CD4-positive, alpha-beta memory T cell (primary cell): ENCODE measurements at regions of chr17 and their contacts with region 1.

Region 1: DNA sequence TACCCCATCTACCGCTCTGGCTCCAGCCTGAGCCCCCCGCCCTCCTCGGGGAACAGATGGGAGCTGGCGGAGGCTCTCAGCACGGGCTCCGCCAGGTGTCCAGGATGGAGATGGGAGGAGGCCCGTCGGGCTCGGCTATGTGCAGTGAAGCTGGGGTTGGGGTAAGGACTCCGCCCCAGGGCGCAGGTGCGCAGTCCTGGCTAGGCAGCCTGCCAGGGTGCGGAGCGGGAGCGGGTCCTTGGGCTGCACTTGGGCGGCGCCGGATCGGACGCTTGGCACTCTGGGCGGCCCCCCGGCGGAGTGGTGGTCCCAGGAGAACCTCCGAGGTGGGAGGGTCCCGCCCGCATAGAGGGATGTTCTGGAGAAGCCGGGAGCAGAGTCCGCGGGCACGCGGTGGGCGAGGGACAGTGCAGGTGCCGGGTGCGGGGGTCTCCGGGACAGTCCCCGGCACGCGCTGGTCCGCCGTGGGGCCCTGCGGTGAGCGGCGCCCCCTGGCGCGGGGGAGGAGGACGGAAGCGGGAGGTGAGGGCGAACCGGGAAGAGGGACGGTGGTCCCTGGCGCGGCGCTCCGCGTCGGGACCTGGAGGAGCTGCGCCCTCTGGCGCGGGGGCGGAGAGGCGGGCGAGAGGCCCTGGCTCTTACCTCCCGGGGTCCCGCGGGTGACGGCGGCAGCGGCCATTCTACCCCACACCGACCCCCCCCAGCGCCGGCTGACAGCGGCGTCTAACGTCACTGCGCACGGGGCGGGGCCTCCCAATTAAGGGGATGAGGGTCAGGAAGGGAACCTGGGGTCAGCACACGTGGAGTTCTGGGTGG is at the start of gene CAMTA2:
- DNase-seq: peak; percentile 78 to 90 (median 81)
- H3K4me3 ChIP-seq: peak within 1 kb of the TSS; percentile 74 to 95
- H3K4me3 Mint-ChIP-seq: peak within 1 kb of the TSS; percentile 92 to 95 (median 93)
- H3K27ac ChIP-seq: peak within 1 kb of the TSS; percentile 85
- H3K27ac Mint-ChIP-seq: peak within 1 kb of the TSS; percentile 94 to 98 (median 96)
- H3K4me1 ChIP-seq: peaks cover 29% of the 10 kb centered on the region
- H3K4me1 Mint-ChIP-seq: peaks cover 29 to 64% (median 37%) of the 10 kb centered on the region in 4 donors
- H3K27me3 ChIP-seq: no peaks in the 10 kb centered on the region
- H3K27me3 Mint-ChIP-seq: no peaks in the 10 kb centered on the region
- total RNA-seq, gene CAMTA2: 63.0 to 84.8 TPM

Region 2: GRCh38 chr17:4939796-4940624 is 47.1 kb before region 1 on chr17 and contains the starts of genes RNF167 and SLC25A11:
- CTCF ChIA-PET with region 1: interaction called, 9 read pairs
- POLR2A ChIA-PET with region 1: interaction called, 35 read pairs
- intact Hi-C with region 1: loop called (anchors 2 kb)
- DNase-seq: peak; percentile 96 to 99 (median 99)
- H3K4me3 ChIP-seq: peak within 1 kb of the TSS; percentile 99
- H3K4me3 Mint-ChIP-seq: peak within 1 kb of the TSS; percentile 95 to 100 (median 98)
- H3K27ac ChIP-seq: peak within 1 kb of the TSS; percentile 81
- H3K27ac Mint-ChIP-seq: peak within 1 kb of the TSS; percentile 92 to 100 (median 98)
- H3K4me1 ChIP-seq: peaks cover 57% of the 10 kb centered on the region
- H3K4me1 Mint-ChIP-seq: peaks cover 43 to 72% (median 55%) of the 10 kb centered on the region in 4 donors
- H3K27me3 ChIP-seq: no peaks in the 10 kb centered on the region
- H3K27me3 Mint-ChIP-seq: no peaks in the 10 kb centered on the region
- total RNA-seq, gene RNF167: 154 to 172 TPM
- total RNA-seq, gene SLC25A11: 43.5 to 49.5 TPM

Region 3: DNA sequence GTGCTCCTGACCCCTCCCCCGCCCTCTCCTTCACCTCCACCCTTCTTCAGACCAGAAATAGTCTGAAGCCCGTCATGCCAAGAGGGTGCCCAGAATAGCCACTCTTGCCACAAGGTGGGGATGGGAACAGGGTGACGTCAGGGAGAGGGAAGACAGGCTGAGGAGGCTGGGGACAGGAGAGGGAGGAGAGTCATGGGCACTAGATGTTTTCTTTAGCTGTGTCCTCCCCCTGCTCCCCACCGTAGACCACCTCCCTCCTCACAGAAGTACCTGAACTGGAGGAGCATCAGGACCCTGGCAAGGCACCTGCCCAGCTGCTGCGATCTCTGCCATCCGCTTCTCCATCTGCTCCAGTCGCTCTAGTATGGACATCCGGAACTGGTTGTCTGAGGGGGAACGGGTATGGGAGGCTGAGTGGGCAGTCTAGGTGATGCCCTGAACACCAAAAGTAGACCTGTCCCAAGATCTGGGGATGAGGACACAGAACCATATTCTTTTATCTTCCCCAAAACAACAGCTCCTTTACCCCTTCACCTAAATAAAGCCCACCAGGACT is 13.0 kb before region 1 on chr17:
- CTCF ChIA-PET with region 1: interaction called, 14 read pairs
- POLR2A ChIA-PET with region 1: interaction called, 79 read pairs
- intact Hi-C with region 1: no loop called
- DNase-seq: no peak
- H3K4me3 ChIP-seq: no peak overlapping the region
- H3K4me3 Mint-ChIP-seq: no peak overlapping the region
- H3K27ac ChIP-seq: no peak overlapping the region
- H3K27ac Mint-ChIP-seq: peak overlapping the region in 3 of 7 donors; percentile 29 to 68 (median 57)
- H3K4me1 ChIP-seq: peaks cover 8% of the 10 kb centered on the region
- H3K4me1 Mint-ChIP-seq: peaks cover 4 to 22% (median 16%) of the 10 kb centered on the region in 4 donors
- H3K27me3 ChIP-seq: no peaks in the 10 kb centered on the region
- H3K27me3 Mint-ChIP-seq: no peaks in the 10 kb centered on the region

Region 4: DNA sequence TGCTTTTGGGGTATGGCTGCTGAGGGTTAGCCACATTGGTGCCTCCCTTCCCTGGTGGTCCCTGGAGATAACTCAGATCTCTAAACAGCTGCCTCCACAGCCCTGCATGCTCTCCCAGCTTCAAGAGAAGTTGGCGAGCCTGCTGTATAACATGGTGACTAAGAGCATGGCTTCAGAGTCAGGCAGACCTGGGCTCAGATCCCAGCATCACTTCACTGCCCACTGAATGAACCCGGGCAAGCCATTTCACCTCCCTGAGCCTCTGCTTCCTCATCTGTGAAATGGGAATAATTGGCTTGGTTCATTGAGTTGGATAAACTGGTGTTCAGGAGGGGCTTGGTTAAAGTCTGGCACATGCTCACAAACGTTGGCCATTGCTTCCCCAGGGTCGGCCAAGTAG is 27.2 kb after region 1 on chr17:
- CTCF ChIA-PET with region 1: no interaction called
- POLR2A ChIA-PET with region 1: no interaction called
- intact Hi-C with region 1: no loop called
- DNase-seq: no peak
- H3K4me3 ChIP-seq: no peak overlapping the region
- H3K4me3 Mint-ChIP-seq: no peak overlapping the region
- H3K27ac ChIP-seq: no peak overlapping the region
- H3K27ac Mint-ChIP-seq: peak overlapping the region in 1 of 7 donors; percentile 85
- H3K4me1 ChIP-seq: no peaks in the 10 kb centered on the region
- H3K4me1 Mint-ChIP-seq: peaks cover 0 to 5% (median under 1%) of the 10 kb centered on the region in 4 donors
- H3K27me3 ChIP-seq: no peaks in the 10 kb centered on the region
- H3K27me3 Mint-ChIP-seq: no peaks in the 10 kb centered on the region

Region 5: DNA sequence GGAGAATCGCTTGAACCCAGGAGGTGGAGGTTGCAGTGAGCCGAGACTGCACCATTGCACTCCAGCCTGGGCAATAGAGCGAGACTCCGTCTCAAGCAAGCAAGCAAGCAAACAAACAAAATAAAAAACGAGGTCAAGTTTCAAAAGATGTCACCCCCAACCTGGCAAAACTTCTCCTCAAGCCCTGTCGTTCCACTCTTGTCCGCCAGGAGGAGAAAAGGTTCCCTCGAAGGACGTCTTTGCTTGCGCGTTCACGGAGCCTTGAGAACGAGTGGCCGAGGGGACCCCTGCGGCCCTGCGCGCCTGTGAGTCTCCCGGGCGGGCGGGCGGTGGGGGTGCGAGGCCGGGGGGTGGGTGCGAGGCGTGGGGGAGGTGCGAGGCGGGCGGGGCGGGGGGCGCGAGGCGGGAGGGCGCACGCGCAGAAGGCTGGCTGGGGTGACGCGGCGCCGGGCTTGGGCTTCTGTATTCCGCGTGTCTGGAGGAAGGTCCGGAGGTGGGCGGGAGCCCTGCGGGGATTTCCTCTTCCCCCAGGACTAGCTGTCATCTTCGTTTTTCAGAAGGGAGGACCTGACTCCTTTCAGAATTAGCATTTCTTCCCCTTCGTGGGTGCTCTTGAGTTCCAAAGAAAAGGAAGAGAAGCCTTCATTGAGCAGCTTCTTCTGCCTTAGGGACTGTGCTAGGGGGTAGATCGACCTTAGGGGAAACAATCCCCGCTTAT is 44.4 kb after region 1 on chr17:
- CTCF ChIA-PET with region 1: interaction called, 6 read pairs
- POLR2A ChIA-PET with region 1: interaction called, 4 read pairs
- intact Hi-C with region 1: loop called (anchors 1 kb)
- DNase-seq: peak; percentile 77 to 83 (median 81)
- H3K4me3 ChIP-seq: peak overlapping the region in 1 of 2 donors; percentile 23
- H3K4me3 Mint-ChIP-seq: peak overlapping the region; percentile 79 to 89 (median 87)
- H3K27ac ChIP-seq: peak overlapping the region; percentile 67
- H3K27ac Mint-ChIP-seq: peak overlapping the region; percentile 90 to 94 (median 93)
- H3K4me1 ChIP-seq: peaks cover 25% of the 10 kb centered on the region
- H3K4me1 Mint-ChIP-seq: peaks cover 11 to 38% (median 17%) of the 10 kb centered on the region in 4 donors
- H3K27me3 ChIP-seq: no peaks in the 10 kb centered on the region
- H3K27me3 Mint-ChIP-seq: no peaks in the 10 kb centered on the region

Region 6: DNA sequence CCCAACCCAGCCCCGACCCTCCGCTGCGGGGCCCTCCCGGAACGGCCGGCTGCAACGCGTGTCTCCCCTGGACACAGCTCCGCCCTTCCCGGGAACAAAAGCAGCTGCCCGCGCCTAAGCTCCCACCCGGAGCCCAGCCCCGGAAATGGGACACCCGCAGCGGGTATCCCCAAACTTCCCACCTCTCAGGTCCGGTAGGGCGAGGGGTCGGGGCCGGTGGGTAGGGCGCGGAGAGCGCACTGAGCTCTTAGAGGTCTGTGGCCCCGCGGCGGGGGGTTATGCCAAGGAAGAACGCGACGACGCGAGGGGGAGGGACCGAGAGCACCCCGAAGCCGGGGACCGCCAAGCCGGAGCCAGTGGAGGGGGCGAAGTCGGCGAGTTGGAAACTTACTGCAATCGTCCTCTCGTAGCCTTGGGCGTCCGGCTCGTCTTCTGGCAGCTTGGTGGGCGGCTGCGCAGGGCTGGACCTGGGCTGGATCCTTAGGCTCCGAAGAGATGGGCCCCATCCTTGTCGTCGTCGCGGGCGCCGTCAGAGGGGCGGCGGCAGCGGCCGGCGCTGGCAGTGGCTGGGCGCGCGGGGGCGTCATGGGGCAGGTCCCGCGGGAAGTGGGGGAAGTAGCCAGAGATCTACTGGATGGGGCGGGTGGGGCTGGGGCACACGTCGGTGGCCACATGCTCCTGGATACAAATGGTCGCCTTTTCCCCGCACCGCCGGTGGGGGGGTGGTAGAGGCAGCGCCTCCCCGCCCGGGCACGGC is 135.6 kb after region 1 on chr17:
- CTCF ChIA-PET with region 1: no interaction called
- POLR2A ChIA-PET with region 1: no interaction called
- intact Hi-C with region 1: no loop called
- DNase-seq: no peak
- H3K4me3 ChIP-seq: no peak overlapping the region
- H3K4me3 Mint-ChIP-seq: peak overlapping the region in 2 of 8 donors; percentile 8 to 59
- H3K27ac ChIP-seq: no peak overlapping the region
- H3K27ac Mint-ChIP-seq: no peak overlapping the region
- H3K4me1 ChIP-seq: no peaks in the 10 kb centered on the region
- H3K4me1 Mint-ChIP-seq: peaks cover 0 to 3% (median under 1%) of the 10 kb centered on the region in 4 donors
- H3K27me3 ChIP-seq: no peaks in the 10 kb centered on the region
- H3K27me3 Mint-ChIP-seq: peaks cover 26 to 47% of the 10 kb centered on the region in 2 donors